ENCODE measurements at regions of chr9 and their contacts with region 1.

Region 1: DNA sequence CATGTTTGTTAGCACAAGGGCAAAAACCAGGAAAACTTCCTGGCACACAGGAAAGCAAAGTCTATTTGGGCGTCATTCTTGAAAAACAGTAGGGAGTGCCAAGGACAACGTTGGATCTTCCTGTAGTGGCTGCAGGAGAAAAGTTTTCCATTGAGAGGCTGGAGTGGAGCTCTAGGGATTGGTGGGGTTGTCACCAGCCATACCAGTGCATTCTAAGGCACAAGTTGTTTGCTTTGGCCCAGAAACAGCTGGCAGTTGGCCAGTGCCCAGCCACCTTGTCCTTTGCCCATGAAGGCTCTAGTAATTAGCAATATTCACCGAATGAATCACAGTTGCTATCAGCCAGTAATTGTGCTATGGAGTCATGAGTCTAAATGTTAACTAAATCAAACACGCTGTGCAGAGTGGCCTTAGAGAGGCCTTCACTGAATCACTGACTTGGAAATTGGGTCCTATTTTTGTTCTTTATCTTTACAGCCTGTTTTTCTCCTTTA is 26.4 kb downstream of the TNFSF15 start:
- DNase-seq: peak; percentile 100
- H3K4me3 ChIP-seq: no peak overlapping the region
- H3K27ac ChIP-seq: peak overlapping the region; percentile 86
- H3K4me1 ChIP-seq: peaks cover 31% of the 10 kb centered on the region
- H3K27me3 ChIP-seq: no peaks in the 10 kb centered on the region
- CTCF ChIP-seq: no peak
- POLR2A ChIP-seq: no peak

Region 2: GRCh38 chr9:114681594-114682332 is 97.6 kb before region 1 on chr9 and contains the start of gene TEX48:
- CTCF ChIA-PET with region 1: interaction called, 3 read pairs
- POLR2A ChIA-PET with region 1: no interaction called
- dilution Hi-C with region 1: no loop called
- intact Hi-C with region 1: loop called (anchors 1 kb)
- DNase-seq: peak; percentile 52
- H3K4me3 ChIP-seq: no peak within 1 kb of the TSS
- H3K27ac ChIP-seq: no peak within 1 kb of the TSS
- H3K4me1 ChIP-seq: peaks cover 23% of the 10 kb centered on the region
- H3K27me3 ChIP-seq: no peaks in the 10 kb centered on the region
- CTCF ChIP-seq: peak; percentile 67 to 78
- POLR2A ChIP-seq: no peak
- total RNA-seq, gene TEX48: not detected in 2 replicates

Region 3: DNA sequence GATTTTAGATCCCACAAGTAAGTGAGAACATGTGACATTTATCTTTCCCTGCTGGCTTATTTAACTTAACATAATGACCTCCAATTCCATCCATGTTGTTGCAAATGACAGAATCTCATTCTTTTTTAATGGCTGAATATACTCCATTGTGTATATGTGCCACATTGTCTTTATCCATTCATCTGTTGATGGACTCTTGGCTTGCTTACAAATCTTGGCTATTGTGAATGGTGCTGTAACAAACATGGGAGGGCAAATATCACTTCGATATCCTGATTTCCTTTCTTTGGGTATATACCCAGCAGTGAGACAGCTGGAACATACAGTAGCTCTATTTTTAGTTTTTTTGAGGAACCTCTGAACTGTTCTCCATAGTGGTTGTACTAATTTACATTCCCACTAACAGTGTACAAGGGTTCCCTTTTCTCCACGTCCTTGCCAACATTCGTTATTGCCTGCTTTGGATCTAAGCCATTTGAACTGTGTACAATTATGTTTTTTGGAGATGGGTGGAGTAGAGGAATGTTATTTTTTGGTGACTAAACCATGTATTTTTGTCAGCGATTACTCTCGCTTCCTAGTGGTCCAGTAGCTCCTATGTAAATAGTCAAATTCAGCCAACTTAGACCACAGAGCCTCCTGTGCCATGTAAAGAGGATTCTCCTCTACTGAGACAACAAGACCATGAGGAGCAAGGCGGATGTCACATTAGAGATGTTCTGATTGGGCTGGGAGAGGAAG is 34.1 kb before region 1 on chr9:
- CTCF ChIA-PET with region 1: interaction called, 3 read pairs
- POLR2A ChIA-PET with region 1: no interaction called
- dilution Hi-C with region 1: no loop called
- intact Hi-C with region 1: loop called (anchors 1 kb)
- DNase-seq: peak; percentile 68
- H3K4me3 ChIP-seq: no peak overlapping the region
- H3K27ac ChIP-seq: peak overlapping the region; percentile 12
- H3K4me1 ChIP-seq: peaks cover 9% of the 10 kb centered on the region
- H3K27me3 ChIP-seq: no peaks in the 10 kb centered on the region
- CTCF ChIP-seq: no peak
- POLR2A ChIP-seq: no peak

Region 4: GRCh38 chr9:114805670-114806525 is 26.5 kb after region 1 on chr9 and contains the start of gene TNFSF15:
- CTCF ChIA-PET with region 1: interaction called, 7 read pairs
- POLR2A ChIA-PET with region 1: no interaction called
- dilution Hi-C with region 1: no loop called
- intact Hi-C with region 1: loop called (anchors 1 kb)
- DNase-seq: peak; percentile 68
- H3K4me3 ChIP-seq: peak within 1 kb of the TSS; percentile 28 to 57 (median 33)
- H3K27ac ChIP-seq: peak within 1 kb of the TSS; percentile 64
- H3K4me1 ChIP-seq: peaks cover 38% of the 10 kb centered on the region
- H3K27me3 ChIP-seq: no peaks in the 10 kb centered on the region
- CTCF ChIP-seq: no peak
- POLR2A ChIP-seq: peak; percentile 54
- total RNA-seq, gene TNFSF15: 13.6 and 14.3 TPM in 2 replicates

Region 5: DNA sequence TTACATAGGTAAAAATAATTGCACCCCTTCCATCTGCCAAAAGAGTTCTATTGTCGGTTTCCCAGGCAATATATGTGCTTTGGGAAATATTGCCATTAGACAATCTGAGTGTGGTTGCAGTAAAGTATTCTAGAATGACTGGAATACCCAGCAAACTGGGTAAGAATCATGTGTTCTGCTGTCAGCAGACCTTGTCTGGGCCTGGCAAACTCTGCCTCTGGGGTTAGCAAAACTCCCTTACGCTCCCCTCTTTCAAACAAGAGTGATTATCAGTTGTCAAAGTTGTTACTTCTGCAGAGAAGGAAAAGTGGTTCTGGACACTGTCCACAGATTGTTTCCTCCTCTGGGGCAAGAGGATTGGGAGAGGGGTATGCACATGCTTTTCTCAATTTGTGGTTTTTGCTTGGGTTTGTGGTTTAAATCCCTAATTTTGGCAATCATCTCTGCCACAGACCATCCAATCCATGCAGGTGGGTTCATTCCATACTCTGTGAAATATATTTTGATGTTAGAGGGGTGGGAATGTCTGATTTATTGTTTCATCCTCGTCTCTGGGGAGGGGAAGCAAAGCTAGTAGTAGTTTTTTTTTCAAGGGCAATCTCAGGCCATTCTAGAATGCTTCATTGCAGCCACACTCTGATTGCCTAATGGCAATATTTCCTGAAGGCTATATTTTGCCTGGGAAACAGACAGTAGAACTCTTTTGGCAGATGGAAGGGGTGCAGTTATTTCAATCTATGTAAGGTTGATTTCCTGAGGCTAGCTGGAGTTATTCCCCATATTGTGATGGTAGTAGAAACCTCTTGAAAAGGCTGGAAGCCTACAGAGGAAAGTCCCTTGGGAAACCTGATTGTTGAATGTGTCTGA is 50.4 kb after region 1 on chr9:
- CTCF ChIA-PET with region 1: no interaction called
- POLR2A ChIA-PET with region 1: no interaction called
- dilution Hi-C with region 1: no loop called
- intact Hi-C with region 1: loop called (anchors 5 kb)
- DNase-seq: no peak
- H3K4me3 ChIP-seq: no peak overlapping the region
- H3K27ac ChIP-seq: no peak overlapping the region
- H3K4me1 ChIP-seq: no peaks in the 10 kb centered on the region
- H3K27me3 ChIP-seq: no peaks in the 10 kb centered on the region
- CTCF ChIP-seq: no peak
- POLR2A ChIP-seq: no peak

Region 6: DNA sequence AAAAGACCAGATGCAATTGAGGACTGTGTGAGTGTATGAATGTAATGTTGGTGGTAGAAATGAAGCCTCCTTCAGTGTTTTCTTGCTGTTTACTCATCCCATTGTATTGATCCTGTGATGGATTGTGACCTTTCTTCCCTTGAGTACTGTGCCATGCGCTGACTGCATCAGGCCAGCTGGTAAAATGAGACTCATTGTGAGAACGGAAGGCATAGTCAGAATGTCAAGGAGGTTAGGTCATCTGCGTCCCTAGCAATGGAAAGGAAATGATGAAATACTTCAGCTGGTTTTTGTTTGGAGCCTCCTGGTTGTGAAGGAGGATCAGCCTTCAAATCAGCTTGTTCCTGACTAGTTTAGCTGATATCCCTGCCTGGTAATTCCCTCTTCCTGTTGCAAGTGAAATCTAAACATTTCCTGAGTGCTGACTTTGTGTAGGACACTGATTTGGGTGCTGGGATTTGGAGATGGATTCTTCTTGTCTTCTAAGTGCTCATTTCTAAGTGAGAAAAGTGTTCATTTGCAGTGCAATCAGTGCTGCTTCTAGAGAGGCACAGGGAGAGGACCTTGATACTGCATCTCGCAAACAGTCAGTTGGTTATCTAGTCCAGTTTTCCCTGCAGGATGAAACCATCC is 115.5 kb after region 1 on chr9:
- CTCF ChIA-PET with region 1: interaction called, 8 read pairs
- POLR2A ChIA-PET with region 1: interaction called, 6 read pairs
- dilution Hi-C with region 1: no loop called
- intact Hi-C with region 1: loop called (anchors 1 kb)
- DNase-seq: peak; percentile 99
- H3K4me3 ChIP-seq: peak overlapping the region in 1 of 3 experiments; percentile 16
- H3K27ac ChIP-seq: peak overlapping the region; percentile 100
- H3K4me1 ChIP-seq: peaks cover 63% of the 10 kb centered on the region
- H3K27me3 ChIP-seq: no peaks in the 10 kb centered on the region
- CTCF ChIP-seq: no peak
- POLR2A ChIP-seq: peak; percentile 62

Measured in endothelial cell of umbilical vein (primary cell).